PC-9 (cell line): ENCODE measurements at regions of chr12 and their contacts with region 1.

Region 1: DNA sequence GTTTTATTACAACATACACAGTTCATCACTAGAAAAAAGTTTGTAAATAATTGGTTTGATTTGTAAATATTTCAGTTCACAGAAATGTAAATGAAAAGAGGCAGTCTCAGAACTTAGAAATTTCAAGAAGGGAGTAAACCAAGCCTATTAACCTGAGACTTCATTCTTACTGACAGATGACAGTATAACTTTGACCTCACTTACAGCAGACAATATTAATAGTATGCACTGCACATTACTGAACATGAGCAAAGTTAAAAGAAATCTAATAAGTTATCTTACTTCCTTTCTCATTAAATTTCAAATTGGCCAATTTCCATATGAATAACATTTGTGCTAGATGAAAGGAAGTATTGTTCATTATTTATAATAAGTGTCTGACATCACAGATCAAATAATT is 235.8 kb downstream of the SLC6A15 start:
- DNase-seq: no peak
- H3K4me3 ChIP-seq: no peak overlapping the region
- H3K27ac ChIP-seq: no peak overlapping the region
- H3K4me1 ChIP-seq: no peaks in the 10 kb centered on the region
- H3K27me3 ChIP-seq: no peaks in the 10 kb centered on the region
- CTCF ChIP-seq: no peak

Region 2: GRCh38 chr12:84661786-84662185 is 15.0 kb before region 1 on chr12:
- CTCF ChIA-PET with region 1: no interaction called
- POLR2A ChIA-PET with region 1: interaction called, 10 read pairs
- intact Hi-C with region 1: no loop called
- DNase-seq: no peak
- H3K4me3 ChIP-seq: no peak overlapping the region
- H3K27ac ChIP-seq: no peak overlapping the region
- H3K4me1 ChIP-seq: no peaks in the 10 kb centered on the region
- H3K27me3 ChIP-seq: no peaks in the 10 kb centered on the region
- CTCF ChIP-seq: no peak

Region 3: GRCh38 chr12:84793558-84794296 is 116.9 kb after region 1 on chr12:
- CTCF ChIA-PET with region 1: no interaction called
- POLR2A ChIA-PET with region 1: no interaction called
- intact Hi-C with region 1: no loop called
- DNase-seq: peak in 1 of 2 experiments; percentile 40
- H3K4me3 ChIP-seq: no peak overlapping the region
- H3K27ac ChIP-seq: no peak overlapping the region
- H3K4me1 ChIP-seq: no peaks in the 10 kb centered on the region
- H3K27me3 ChIP-seq: no peaks in the 10 kb centered on the region
- CTCF ChIP-seq: no peak